MCF 10A (cell line): ENCODE measurements at regions of chr1 and their contacts with region 1.

Region 1: DNA sequence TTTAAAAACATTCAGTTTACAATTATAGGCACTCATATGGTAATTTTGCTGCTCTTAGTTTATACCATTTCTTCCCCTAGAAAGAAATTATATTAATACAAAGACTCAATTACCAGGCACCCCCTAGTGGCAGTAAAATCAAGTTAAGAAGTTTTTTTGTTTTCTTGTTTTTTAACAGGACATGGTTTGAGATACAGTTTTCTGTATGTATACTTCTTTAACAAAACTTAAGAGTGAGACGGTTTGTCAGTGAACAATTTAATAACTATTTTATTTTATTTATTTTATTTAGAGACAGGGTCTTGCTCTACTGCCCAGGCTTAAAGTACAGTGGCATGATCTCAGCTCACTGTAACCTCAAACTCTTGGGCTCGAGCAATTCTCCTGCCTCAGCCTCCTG is 224.6 kb downstream of the FAF1 start:
- DNase-seq: peak; percentile 45
- H3K4me3 Mint-ChIP-seq: no peak overlapping the region
- H3K27ac Mint-ChIP-seq: no peak overlapping the region
- H3K4me1 Mint-ChIP-seq: peaks cover 6% of the 10 kb centered on the region
- H3K27me3 Mint-ChIP-seq: no peaks in the 10 kb centered on the region
- CTCF ChIP-seq: peak; percentile 41

Region 2: DNA sequence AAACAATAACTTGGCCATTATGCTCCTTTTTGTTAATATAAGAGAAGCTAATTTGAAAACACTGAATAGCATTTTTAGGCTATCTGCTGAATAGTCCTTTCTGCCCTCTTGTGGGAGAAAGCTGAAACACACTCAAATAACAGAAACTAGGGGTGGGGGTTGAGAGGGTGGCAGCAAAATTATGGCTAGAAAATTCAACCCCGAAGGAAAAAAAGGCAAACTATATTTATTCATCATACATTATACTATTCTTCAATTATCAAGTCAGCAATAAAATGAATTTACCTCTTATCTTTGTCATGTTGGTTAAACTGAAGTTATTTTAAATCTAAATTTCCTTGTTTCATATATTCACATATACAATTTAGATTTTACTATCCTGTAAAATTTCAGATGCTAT is 31.3 kb before region 1 on chr1:
- CTCF ChIA-PET with region 1: interaction called, 9 read pairs
- POLR2A ChIA-PET with region 1: interaction called, 4 read pairs
- intact Hi-C with region 1: loop called (anchors 2 kb)
- DNase-seq: peak; percentile 66
- H3K4me3 Mint-ChIP-seq: no peak overlapping the region
- H3K27ac Mint-ChIP-seq: no peak overlapping the region
- H3K4me1 Mint-ChIP-seq: peaks cover 12% of the 10 kb centered on the region
- H3K27me3 Mint-ChIP-seq: no peaks in the 10 kb centered on the region
- CTCF ChIP-seq: peak; percentile 60

Region 3: DNA sequence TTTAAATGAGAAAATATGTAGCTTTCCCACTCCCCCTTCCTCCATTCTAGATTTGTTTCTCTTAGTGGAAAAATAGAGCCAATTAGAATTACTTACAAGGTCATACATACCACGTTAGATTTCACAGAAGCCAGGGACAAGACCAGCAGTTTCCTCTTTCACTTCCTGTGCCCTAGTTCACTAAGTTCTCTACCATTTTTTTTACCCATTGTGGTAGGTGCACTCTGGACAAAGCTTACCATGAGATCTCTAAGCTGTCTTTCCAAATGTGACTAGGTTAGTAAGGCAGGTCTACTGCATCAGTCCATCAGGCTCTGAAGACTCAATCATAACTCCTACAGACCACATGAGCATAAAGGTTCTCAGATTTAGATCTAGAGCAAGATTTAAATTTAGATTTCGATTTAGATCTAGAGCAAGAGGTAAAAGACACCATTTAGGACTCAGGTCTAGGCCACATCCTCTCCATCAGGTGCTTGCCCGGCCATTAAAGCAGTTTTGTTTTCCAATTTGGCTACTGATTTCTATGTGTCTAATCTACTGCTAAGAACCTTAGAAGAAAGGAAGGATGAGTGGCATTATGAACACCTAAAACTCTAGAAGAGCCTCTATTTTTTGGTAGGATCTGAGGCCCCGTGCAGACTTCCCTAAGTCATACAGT is 10.7 kb before region 1 on chr1:
- CTCF ChIA-PET with region 1: interaction called, 23 read pairs
- POLR2A ChIA-PET with region 1: no interaction called
- intact Hi-C with region 1: no loop called
- DNase-seq: no peak
- H3K4me3 Mint-ChIP-seq: no peak overlapping the region
- H3K27ac Mint-ChIP-seq: no peak overlapping the region
- H3K4me1 Mint-ChIP-seq: no peaks in the 10 kb centered on the region
- H3K27me3 Mint-ChIP-seq: no peaks in the 10 kb centered on the region
- CTCF ChIP-seq: no peak

Region 4: DNA sequence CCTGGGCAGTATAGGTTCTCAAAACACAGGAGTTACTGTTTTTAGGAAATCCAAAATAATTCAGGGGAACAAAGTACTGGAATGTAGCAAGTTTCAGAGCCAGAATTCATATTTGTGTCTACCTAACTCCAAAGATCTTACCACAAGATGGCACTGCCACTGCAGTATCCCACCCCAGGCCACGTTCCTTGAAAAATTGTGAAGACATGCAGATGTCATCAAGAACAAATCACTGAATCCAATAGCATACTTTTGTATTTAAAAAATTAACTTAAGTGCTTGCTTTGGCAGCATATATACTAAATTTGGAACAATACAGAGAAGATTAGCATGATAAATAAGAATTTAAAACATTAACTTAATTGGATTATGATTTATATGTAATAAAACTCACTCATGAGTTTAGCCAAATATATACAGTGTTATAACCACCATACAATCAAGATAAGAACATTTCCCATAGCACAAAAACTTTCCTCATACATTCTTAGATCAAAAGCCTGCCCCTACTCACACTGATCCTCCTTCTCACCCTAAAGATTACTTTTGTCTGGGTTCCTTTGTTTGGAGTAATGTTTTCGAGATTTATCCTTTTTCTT is 14.7 kb after region 1 on chr1:
- CTCF ChIA-PET with region 1: interaction called, 10 read pairs
- POLR2A ChIA-PET with region 1: no interaction called
- intact Hi-C with region 1: no loop called
- DNase-seq: peak; percentile 47
- H3K4me3 Mint-ChIP-seq: no peak overlapping the region
- H3K27ac Mint-ChIP-seq: no peak overlapping the region
- H3K4me1 Mint-ChIP-seq: no peaks in the 10 kb centered on the region
- H3K27me3 Mint-ChIP-seq: no peaks in the 10 kb centered on the region
- CTCF ChIP-seq: peak; percentile 40